AG04450 (cell line): ENCODE measurements at regions of chr12 and their contacts with region 1.

Region 1: DNA sequence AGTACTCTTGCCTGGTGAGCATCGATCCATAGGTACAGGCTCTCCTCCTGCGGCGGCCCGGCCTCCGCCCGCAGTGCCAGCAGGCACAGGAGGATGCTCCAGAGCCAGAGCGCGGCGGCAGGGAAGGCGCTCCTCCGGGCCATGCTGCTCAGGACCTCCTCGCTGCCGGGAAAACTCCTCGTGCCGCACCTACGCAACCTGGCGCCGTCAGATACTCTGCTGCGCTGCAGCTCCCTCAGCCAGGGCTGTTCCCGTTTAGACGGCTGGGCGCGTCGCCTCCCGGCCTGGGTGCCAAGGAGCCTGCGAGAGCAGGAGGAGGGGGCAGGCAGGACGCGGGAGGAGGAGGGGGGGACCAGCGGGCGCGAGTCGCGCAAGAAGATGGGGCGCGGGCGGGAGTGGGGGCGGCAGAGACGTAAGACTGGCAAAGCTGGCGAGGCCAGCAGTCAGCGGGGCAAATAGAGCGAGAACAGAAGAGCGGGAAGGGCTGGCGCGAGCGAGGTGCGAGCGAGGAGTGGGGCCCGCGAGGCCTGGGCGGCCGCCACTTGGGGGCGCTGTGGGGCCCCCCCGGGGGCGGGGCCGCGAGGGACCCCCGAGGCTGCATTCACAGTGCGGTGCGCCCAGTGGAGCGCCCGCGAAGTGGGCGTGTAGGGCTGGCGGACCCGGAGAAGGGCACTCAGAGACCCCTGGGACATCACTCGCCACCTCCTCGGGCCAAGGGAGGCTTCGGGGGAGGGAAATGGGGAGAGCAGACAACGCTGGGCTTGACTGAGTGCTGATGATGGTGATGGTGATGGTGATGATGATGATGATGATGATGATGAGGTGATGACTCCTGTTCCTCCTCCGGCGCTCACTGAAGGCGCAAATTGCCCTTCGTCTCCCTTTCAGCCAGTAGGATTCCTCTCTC is at the start of gene WIF1:
- DNase-seq: no peak
- H3K4me3 ChIP-seq: peak within 1 kb of the TSS; percentile 31
- H3K27ac ChIP-seq: no peak within 1 kb of the TSS
- H3K27me3 ChIP-seq: peaks cover 45% of the 10 kb centered on the region
- CTCF ChIP-seq: peak; percentile 30
- polyA plus RNA-seq, gene WIF1: not detected in 2 replicates

Region 2: DNA sequence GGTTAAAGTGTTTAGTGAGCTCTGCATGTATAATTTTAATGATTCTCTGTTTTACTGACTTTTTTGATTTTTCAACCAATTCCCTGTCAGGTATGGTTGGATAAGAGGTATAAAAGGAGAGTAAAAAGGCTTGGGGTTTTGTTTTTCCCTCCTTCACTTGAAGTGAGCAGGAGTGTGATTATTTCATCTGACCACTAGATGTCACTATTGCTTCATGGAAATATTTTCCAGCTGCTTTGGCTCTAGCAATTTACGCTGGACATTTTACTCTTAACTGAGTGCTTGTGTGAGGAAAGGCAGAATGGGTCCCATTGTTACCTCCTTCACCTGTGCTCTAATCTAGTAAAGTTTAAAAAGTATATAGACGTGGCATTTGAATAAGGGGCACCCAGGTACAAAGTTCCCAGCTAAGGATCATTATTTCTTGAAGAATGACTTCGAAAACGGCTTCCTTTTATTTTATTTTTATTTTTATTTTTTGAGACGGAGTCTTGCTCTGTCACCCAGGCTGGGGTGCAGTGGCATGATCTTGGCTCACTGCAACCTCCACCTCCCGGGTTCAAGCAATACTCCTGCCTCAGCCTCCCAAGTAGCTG is 230.3 kb before region 1 on chr12:
- CTCF ChIA-PET with region 1: interaction called, 31 read pairs
- POLR2A ChIA-PET with region 1: no interaction called
- DNase-seq: no peak
- H3K4me3 ChIP-seq: no peak overlapping the region
- H3K27ac ChIP-seq: no peak overlapping the region
- H3K27me3 ChIP-seq: peaks cover 11% of the 10 kb centered on the region
- CTCF ChIP-seq: peak; percentile 70

Region 3: GRCh38 chr12:65074932-65075331 is 46.4 kb before region 1 on chr12:
- CTCF ChIA-PET with region 1: interaction called, 10 read pairs
- POLR2A ChIA-PET with region 1: no interaction called
- DNase-seq: no peak
- H3K4me3 ChIP-seq: no peak overlapping the region
- H3K27ac ChIP-seq: no peak overlapping the region
- H3K27me3 ChIP-seq: no peaks in the 10 kb centered on the region
- CTCF ChIP-seq: no peak

Region 4: DNA sequence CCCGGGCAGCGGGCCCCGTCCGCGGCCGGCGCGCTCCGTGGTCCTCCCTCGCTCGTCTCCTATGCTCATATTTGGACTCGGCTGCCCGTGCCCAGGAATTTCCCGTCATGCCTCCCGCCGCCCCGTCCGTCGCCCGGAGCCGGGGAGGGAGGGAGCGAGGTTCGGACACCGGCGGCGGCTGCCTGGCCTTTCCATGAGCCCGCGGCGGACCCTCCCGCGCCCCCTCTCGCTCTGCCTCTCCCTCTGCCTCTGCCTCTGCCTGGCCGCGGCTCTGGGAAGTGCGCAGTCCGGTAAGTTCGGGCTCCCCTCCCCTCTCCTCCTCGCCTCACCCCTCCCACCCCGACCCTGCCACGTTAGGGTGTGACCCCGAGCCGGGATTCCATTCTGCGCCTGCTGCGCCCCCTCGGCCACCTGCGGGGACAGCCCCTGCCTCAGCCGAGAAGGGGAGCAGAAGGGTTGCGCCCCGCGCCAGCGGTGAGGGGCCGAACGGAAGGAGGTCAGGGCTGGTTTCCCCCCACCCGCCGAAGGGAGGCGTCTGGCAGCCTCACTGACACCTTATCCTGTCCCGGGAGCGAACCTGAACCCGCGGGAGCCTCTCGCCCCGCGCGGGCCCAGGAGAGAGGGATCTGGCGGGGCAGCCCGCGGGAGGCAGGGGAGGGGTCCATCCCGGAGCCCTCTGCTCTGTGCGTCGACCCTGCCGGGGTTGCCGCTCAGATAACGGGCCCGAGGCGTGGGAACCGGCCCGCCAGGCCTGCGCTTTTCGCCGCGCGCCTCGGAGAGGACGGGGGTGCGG is 157.5 kb after region 1 on chr12 and contains the start of gene MSRB3:
- CTCF ChIA-PET with region 1: no interaction called
- POLR2A ChIA-PET with region 1: no interaction called
- DNase-seq: peak; percentile 37
- H3K4me3 ChIP-seq: peak within 1 kb of the TSS; percentile 82
- H3K27ac ChIP-seq: peak within 1 kb of the TSS; percentile 88
- H3K27me3 ChIP-seq: no peaks in the 10 kb centered on the region
- CTCF ChIP-seq: no peak
- polyA plus RNA-seq, gene MSRB3: 60.9 and 75.6 TPM in 2 replicates

Region 5: GRCh38 chr12:65307169-65307501 is 185.8 kb after region 1 on chr12:
- CTCF ChIA-PET with region 1: no interaction called
- POLR2A ChIA-PET with region 1: no interaction called
- DNase-seq: no peak
- H3K4me3 ChIP-seq: no peak overlapping the region
- H3K27ac ChIP-seq: peak overlapping the region; percentile 40
- H3K27me3 ChIP-seq: no peaks in the 10 kb centered on the region
- CTCF ChIP-seq: no peak